CD4-positive, alpha-beta memory T cell (primary cell): ENCODE measurements at regions of chr19 and their contacts with region 1.

Region 1: DNA sequence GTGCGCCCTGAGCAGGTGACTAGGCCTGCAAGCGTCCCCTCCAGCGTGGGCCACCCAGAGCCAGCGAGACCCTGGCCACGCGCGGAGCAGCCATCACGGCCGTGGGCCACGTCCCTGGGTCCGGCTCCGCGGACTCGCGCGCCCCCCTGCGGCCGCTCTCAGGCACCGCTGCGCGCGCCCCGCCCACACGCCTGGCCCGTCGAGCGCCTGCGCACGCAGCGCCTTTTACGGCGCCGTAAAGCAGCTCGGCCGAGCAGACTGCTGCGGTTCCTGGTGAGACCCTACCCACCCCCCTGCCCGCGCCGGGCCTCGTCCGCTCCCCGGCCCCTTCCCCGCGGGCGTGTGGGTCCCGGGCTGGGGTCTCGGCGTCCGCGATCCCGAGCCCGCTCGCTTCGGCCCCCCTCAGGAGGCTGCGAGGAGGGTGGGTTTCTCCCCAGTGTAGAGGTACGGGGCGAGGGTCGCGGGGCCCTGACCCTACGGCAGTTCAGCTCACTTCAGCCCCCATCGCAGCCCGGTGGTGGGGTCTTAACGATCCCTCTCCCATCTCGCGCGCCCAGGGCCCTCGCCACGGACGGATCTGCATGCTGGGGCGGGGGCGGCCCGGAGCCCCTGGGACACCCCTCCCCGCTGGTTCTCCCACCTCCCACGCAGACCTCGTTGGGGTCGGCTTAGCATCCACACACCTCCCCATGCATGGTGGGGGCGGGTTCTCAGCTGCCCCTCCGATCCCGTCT is at the start of gene TRAPPC5:
- DNase-seq: peak; percentile 80 to 89 (median 86)
- H3K4me3 ChIP-seq: peak within 1 kb of the TSS; percentile 73 to 88
- H3K4me3 Mint-ChIP-seq: peak within 1 kb of the TSS; percentile 86 to 96 (median 92)
- H3K27ac ChIP-seq: peak within 1 kb of the TSS; percentile 82
- H3K27ac Mint-ChIP-seq: peak within 1 kb of the TSS; percentile 91 to 96 (median 95)
- H3K4me1 ChIP-seq: peaks cover 42% of the 10 kb centered on the region
- H3K4me1 Mint-ChIP-seq: peaks cover 21 to 58% (median 39%) of the 10 kb centered on the region in 4 donors
- H3K27me3 ChIP-seq: peaks cover 6% of the 10 kb centered on the region
- H3K27me3 Mint-ChIP-seq: peaks cover 11 to 21% of the 10 kb centered on the region in 2 donors
- total RNA-seq, gene TRAPPC5: 60.7 to 62.1 TPM

Region 2: GRCh38 chr19:7098701-7099596 is 581.8 kb before region 1 on chr19:
- CTCF ChIA-PET with region 1: interaction called, 3 read pairs
- POLR2A ChIA-PET with region 1: interaction called, 3 read pairs
- intact Hi-C with region 1: loop called (anchors 1 kb)
- DNase-seq: peak; percentile 82 to 92 (median 87)
- H3K4me3 ChIP-seq: peak overlapping the region; percentile 57 to 86
- H3K4me3 Mint-ChIP-seq: peak overlapping the region; percentile 84 to 96 (median 92)
- H3K27ac ChIP-seq: peak overlapping the region; percentile 86
- H3K27ac Mint-ChIP-seq: peak overlapping the region; percentile 74 to 98 (median 94)
- H3K4me1 ChIP-seq: peaks cover 23% of the 10 kb centered on the region
- H3K4me1 Mint-ChIP-seq: peaks cover 13 to 40% (median 27%) of the 10 kb centered on the region in 4 donors
- H3K27me3 ChIP-seq: no peaks in the 10 kb centered on the region
- H3K27me3 Mint-ChIP-seq: peaks cover 0 to 3% of the 10 kb centered on the region in 2 donors

Region 3: GRCh38 chr19:7629347-7630054 is 51.3 kb before region 1 on chr19 and contains the starts of genes PET100 and XAB2:
- CTCF ChIA-PET with region 1: interaction called, 7 read pairs
- POLR2A ChIA-PET with region 1: interaction called, 10 read pairs
- intact Hi-C with region 1: loop called (anchors 2 kb)
- DNase-seq: peak; percentile 93 to 98 (median 96)
- H3K4me3 ChIP-seq: peak within 1 kb of the TSS; percentile 81 to 96
- H3K4me3 Mint-ChIP-seq: peak within 1 kb of the TSS; percentile 95 to 99 (median 96)
- H3K27ac ChIP-seq: peak within 1 kb of the TSS; percentile 94
- H3K27ac Mint-ChIP-seq: peak within 1 kb of the TSS; percentile 92 to 100 (median 99)
- H3K4me1 ChIP-seq: peaks cover 31% of the 10 kb centered on the region
- H3K4me1 Mint-ChIP-seq: peaks cover 16 to 47% (median 34%) of the 10 kb centered on the region in 4 donors
- H3K27me3 ChIP-seq: no peaks in the 10 kb centered on the region
- H3K27me3 Mint-ChIP-seq: no peaks in the 10 kb centered on the region
- total RNA-seq, gene PET100: 120 to 144 TPM
- total RNA-seq, gene XAB2: 75.6 to 77.2 TPM

Region 4: DNA sequence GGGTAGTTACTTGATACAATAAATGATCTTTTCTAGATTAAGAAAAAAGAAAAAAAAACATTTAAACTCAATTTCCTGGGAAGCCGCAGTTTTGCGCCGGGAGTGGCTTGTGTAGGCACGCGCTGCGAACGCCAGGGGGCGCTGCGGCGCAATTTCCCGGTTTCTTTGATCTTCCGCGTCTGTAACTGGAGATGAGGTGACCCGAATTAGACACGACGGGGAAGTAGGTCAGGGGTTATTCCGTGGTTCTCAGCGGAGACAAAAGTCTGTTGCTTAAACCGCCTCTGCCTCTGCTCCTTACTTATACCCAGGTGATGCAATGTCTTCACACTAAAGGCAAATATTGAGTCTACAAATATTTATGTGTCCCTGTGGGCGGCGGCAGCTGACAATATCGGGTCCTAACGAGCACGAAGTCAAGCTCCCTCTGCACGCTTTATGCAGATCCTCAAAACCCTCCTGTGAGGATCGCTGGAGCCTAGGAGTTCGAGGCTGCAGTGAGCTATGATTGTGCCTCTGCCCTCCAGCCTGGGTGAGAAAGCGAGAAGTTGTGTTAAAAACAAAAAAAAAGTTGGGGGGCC is 28.6 kb before region 1 on chr19:
- CTCF ChIA-PET with region 1: interaction called, 22 read pairs
- POLR2A ChIA-PET with region 1: interaction called, 4 read pairs
- intact Hi-C with region 1: loop called (anchors 1 kb)
- DNase-seq: peak; percentile 86 to 93 (median 88)
- H3K4me3 ChIP-seq: peak overlapping the region in 1 of 2 donors; percentile 46
- H3K4me3 Mint-ChIP-seq: peak overlapping the region; percentile 70 to 88 (median 81)
- H3K27ac ChIP-seq: peak overlapping the region; percentile 31
- H3K27ac Mint-ChIP-seq: peak overlapping the region; percentile 78 to 95 (median 93)
- H3K4me1 ChIP-seq: peaks cover 7% of the 10 kb centered on the region
- H3K4me1 Mint-ChIP-seq: peaks cover 6 to 13% (median 10%) of the 10 kb centered on the region in 4 donors
- H3K27me3 ChIP-seq: no peaks in the 10 kb centered on the region
- H3K27me3 Mint-ChIP-seq: no peaks in the 10 kb centered on the region

Region 5: DNA sequence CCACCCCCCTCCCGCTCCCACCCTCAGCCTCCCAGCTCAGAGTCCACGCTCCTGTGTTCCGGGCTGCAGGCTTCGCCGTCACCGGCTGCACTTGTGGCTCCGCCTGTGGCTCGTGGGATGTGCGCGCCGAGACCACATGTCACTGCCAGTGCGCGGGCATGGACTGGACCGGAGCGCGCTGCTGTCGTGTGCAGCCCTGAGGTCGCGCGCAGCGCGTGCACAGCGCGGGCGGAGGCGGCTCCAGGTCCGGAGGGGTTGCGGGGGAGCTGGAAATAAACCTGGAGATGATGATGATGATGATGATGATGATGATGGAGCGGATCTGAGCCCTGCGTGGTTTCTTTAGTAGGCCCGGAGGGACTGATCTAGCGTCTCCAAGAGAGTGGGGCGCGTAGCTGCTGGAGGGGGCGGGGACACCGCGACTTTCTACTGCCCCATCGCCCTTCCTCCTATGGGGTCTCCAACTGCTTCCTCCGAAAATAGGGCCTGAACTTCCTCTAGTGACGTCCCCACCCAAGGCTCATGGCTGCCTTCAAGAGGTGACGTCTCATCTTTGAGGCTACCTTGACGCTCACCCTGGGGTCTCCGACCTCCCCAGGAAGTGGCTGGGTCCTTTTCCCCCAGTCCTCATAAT is 10.5 kb before region 1 on chr19:
- CTCF ChIA-PET with region 1: interaction called, 14 read pairs
- POLR2A ChIA-PET with region 1: interaction called, 9 read pairs
- intact Hi-C with region 1: no loop called
- DNase-seq: peak in 1 of 5 donors; percentile 13
- H3K4me3 ChIP-seq: no peak overlapping the region
- H3K4me3 Mint-ChIP-seq: peak overlapping the region; percentile 33 to 71 (median 58)
- H3K27ac ChIP-seq: no peak overlapping the region
- H3K27ac Mint-ChIP-seq: peak overlapping the region in 1 of 7 donors; percentile 35
- H3K4me1 ChIP-seq: peaks cover 12% of the 10 kb centered on the region
- H3K4me1 Mint-ChIP-seq: peaks cover 4 to 19% (median 11%) of the 10 kb centered on the region in 4 donors
- H3K27me3 ChIP-seq: peaks cover 5% of the 10 kb centered on the region
- H3K27me3 Mint-ChIP-seq: peaks cover 19 to 28% of the 10 kb centered on the region in 2 donors

Region 6: GRCh38 chr19:7799640-7800355 is 119.0 kb after region 1 on chr19:
- CTCF ChIA-PET with region 1: interaction called, 67 read pairs
- POLR2A ChIA-PET with region 1: interaction called, 14 read pairs
- intact Hi-C with region 1: loop called (anchors 1 kb)
- DNase-seq: peak in 4 of 5 donors; percentile 32 to 62 (median 42)
- H3K4me3 ChIP-seq: no peak overlapping the region
- H3K4me3 Mint-ChIP-seq: peak overlapping the region in 2 of 8 donors; percentile 3 to 62
- H3K27ac ChIP-seq: no peak overlapping the region
- H3K27ac Mint-ChIP-seq: peak overlapping the region in 2 of 7 donors; percentile 23 to 53
- H3K4me1 ChIP-seq: peaks cover 8% of the 10 kb centered on the region
- H3K4me1 Mint-ChIP-seq: peaks cover 0 to 13% (median 2%) of the 10 kb centered on the region in 4 donors
- H3K27me3 ChIP-seq: peaks cover 6% of the 10 kb centered on the region
- H3K27me3 Mint-ChIP-seq: peaks cover 4 to 22% of the 10 kb centered on the region in 2 donors